Mammary epithelial cell (primary cell): ENCODE measurements at regions of chr12 and their contacts with region 1.

Region 1: DNA sequence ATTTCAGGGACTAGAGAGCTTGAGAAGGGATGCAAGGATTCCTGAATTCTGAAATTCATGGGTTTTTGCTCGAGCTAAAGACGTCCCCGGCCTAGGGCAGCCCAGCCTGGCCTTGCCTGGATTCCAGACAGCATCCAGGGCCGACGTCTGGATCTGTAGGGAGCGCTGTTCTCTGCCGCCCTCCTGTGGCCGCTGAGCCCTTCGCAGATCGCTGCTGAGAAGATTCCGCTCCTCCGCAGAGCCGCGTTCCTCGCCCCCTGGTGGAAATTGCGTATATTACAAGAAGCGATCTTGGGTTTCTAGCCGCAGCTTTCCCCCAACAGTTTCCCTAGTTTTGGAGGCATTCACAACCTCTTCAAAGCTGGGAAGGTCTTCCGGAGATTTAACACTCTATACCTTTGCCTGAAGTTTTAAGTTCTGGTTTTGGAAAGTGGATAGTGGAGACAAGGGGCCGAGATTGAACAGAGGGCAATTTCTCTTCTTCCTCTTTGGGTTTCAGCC is 5.1 kb downstream of the CISTR start:
- DNase-seq: peak; percentile 72
- H3K4me3 ChIP-seq: no peak overlapping the region
- H3K27ac ChIP-seq: no peak overlapping the region
- H3K4me1 ChIP-seq: peaks cover 6% of the 10 kb centered on the region
- H3K27me3 ChIP-seq: peaks cover 10% of the 10 kb centered on the region
- CTCF ChIP-seq: peak; percentile 99 to 100

Region 2: GRCh38 chr12:53180220-53180930 is 566.3 kb before region 1 on chr12 and contains the starts of genes CSAD and ZNF740:
- CTCF ChIA-PET with region 1: interaction called, 16 read pairs
- dilution Hi-C with region 1: no loop called
- in situ Hi-C with region 1: no loop called
- intact Hi-C with region 1: no loop called
- DNase-seq: peak; percentile 97
- H3K4me3 ChIP-seq: peak within 1 kb of the TSS; percentile 59 to 84 (median 67)
- H3K27ac ChIP-seq: peak within 1 kb of the TSS; percentile 69
- H3K4me1 ChIP-seq: peaks cover 16% of the 10 kb centered on the region
- H3K27me3 ChIP-seq: no peaks in the 10 kb centered on the region
- CTCF ChIP-seq: no peak
- total RNA-seq, gene CSAD: 10.2 to 22.1 TPM
- total RNA-seq, gene ZNF740: 10.0 to 30.9 TPM

Region 3: GRCh38 chr12:53701518-53702260 is 45.0 kb before region 1 on chr12:
- CTCF ChIA-PET with region 1: interaction called, 9 read pairs
- dilution Hi-C with region 1: loop called (anchors 5 kb)
- in situ Hi-C with region 1: loop called (anchors 5 kb)
- intact Hi-C with region 1: loop called (anchors 1 kb)
- DNase-seq: peak; percentile 54
- H3K4me3 ChIP-seq: no peak overlapping the region
- H3K27ac ChIP-seq: no peak overlapping the region
- H3K4me1 ChIP-seq: no peaks in the 10 kb centered on the region
- H3K27me3 ChIP-seq: peaks cover 2% of the 10 kb centered on the region
- CTCF ChIP-seq: peak; percentile 94 to 99